PC-3 (cell line): ENCODE measurements at regions of chr19 and their contacts with region 1.

Region 1: GRCh38 chr19:19404879-19405860 is at the start of gene GATAD2A:
- DNase-seq: peak; percentile 95
- ATAC-seq: peak; percentile 76
- H3K4me3 ChIP-seq: peak within 1 kb of the TSS; percentile 85
- H3K27ac ChIP-seq: peak within 1 kb of the TSS; percentile 85
- H3K4me1 ChIP-seq: peaks cover 51% of the 10 kb centered on the region
- H3K27me3 ChIP-seq: no peaks in the 10 kb centered on the region
- CTCF ChIP-seq: peak; percentile 33; the same call in 1 of the 2 replicates
- total RNA-seq, gene GATAD2A: 104 and 143 TPM in 2 replicates

Region 2: GRCh38 chr19:19366612-19367396 is 38.4 kb before region 1 on chr19:
- CTCF ChIA-PET with region 1: interaction called, 4 read pairs
- POLR2A ChIA-PET with region 1: interaction called, 3 read pairs
- intact Hi-C with region 1: loop called (anchors 1 kb)
- DNase-seq: peak; percentile 91
- ATAC-seq: peak; percentile 73
- H3K4me3 ChIP-seq: no peak overlapping the region
- H3K27ac ChIP-seq: 0 out of 2 replicates have a peak overlapping the region, but pooled peaks have one; percentile 12
- H3K4me1 ChIP-seq: peaks cover 18% of the 10 kb centered on the region
- H3K27me3 ChIP-seq: no peaks in the 10 kb centered on the region
- CTCF ChIP-seq: peak; percentile 96

Region 3: DNA sequence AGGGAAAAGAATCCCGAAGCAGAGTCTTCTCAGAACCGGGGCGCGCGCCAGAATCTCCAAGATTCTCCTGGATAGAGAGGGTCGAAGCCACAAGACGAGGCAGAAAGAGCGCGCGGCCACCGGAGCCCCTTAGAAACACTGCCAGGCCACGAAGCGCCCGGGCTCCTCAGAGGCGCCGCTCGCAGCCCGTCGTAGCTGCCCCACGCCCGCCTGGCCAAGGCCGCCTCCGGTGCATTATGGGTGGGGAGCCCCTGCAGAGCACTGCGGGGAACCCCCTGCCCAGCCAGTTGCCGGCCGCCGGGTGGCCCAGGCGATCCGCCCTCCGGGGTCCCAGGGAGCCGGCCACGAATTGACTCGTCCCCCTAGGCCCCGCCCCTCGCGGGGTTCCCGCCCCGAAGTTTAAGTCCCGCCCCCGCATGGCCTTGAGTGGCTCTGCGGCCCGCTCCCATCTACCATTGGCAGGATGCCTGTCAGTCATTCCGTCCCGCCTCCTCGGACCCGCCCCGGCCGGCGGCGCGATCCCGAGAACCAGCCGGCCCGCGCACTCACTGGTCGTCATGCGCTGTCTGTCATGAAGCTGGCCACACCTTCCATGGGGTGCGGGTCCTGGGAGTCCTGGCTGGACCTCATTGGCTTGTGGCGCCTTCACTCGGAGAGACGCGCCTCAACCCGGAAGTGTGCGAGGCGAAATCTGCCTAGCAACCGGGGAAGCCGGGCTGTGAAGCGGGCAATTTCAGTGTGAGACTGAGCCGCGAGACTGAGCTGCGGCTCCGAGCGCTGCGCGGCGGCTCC is 19.9 kb before region 1 on chr19:
- CTCF ChIA-PET with region 1: interaction called, 4 read pairs
- POLR2A ChIA-PET with region 1: interaction called, 10 read pairs
- intact Hi-C with region 1: loop called (anchors 1 kb)
- DNase-seq: peak; percentile 99
- ATAC-seq: peak; percentile 96
- H3K4me3 ChIP-seq: peak overlapping the region; percentile 100
- H3K27ac ChIP-seq: peak overlapping the region; percentile 14; the same call in 1 of the 2 replicates
- H3K4me1 ChIP-seq: peaks cover 29% of the 10 kb centered on the region
- H3K27me3 ChIP-seq: no peaks in the 10 kb centered on the region
- CTCF ChIP-seq: no peak

Region 4: DNA sequence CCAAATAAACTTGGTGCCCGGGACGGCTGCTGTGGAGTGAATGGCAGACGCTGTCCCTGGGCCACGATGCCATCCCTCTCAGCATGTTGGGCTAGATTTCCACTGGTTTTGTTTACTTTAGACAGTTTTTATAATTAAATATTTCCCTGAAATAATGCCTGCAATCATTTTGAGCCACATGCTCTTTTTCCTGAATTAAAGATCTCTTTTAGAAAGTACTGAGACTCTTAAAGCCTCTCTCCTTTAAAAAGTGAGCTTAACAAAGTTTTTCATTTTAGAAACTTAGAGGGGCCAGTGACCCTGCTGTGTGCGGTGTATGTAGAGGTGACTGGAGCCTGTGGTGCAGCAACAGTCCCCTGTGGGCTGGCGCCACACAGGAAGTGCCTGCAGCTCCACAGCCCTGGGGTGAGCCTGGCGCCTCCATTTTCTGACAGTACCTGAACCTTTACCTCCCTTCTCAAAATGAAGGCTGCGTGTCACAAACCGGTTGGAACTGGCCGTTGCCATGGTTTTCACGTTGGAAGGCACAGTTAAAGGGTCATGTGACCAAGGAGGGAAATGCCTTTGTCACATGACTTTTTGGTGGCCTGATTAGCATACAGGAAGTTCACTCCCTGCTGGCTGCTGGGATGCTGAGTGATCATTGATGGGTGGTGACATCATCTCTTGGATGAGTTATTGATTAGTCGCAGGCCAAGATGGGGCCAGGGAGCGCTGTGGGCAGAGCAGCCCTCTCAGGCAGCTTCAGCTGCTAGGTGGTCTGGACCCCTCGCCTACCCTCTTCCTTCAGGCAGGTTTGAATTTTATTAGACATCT is 83.9 kb after region 1 on chr19:
- CTCF ChIA-PET with region 1: interaction called, 3 read pairs
- POLR2A ChIA-PET with region 1: no interaction called
- intact Hi-C with region 1: loop called (anchors 2 kb)
- DNase-seq: peak; percentile 72
- ATAC-seq: peak; percentile 45
- H3K4me3 ChIP-seq: no peak overlapping the region
- H3K27ac ChIP-seq: peak overlapping the region; percentile 76
- H3K4me1 ChIP-seq: peaks cover 22% of the 10 kb centered on the region
- H3K27me3 ChIP-seq: no peaks in the 10 kb centered on the region
- CTCF ChIP-seq: no peak